HepG2 (cell line): ENCODE measurements at regions of chr9 and their contacts with region 1.

Region 1: DNA sequence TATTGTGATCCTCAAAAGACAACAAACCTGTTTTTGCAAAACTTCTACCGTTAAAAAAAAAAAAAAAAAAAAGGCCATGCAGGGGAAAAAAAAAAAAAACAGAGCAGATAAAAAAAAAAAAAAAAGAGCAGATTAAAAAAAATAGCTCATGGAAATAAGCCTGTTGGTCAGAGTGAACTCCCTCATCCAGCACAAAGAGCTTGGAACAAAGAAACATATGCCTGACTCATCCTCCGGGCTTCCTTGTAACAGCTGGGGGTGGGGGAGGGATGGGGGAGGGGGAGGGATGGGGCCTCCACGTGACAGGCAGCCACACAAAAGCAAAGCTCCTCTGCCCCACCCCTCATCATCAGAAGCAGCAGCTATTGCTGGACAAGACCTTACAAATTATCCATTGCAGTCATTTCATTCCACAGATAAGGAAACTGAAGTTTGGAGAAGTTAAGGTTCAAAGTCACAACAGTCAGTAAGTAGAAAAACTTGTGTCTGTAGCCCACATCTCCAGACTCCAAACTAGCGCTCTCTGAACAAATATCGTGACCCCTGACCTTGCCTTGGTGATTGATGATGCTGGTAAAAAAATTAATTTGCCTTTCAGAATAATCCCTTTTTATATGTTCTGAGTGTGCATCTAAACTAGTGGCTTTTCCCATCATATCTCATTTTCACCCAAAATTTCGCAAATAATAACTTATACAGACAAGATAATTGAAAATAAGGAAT is 38.9 kb downstream of the SLC35D2 start:
- DNase-seq: peak; percentile 84
- ATAC-seq: no peak; the same call in 1 of the 3 replicates
- H3K4me3 ChIP-seq: no peak overlapping the region
- H3K27ac ChIP-seq: peak overlapping the region; percentile 54
- H3K4me1 ChIP-seq: peaks cover 63% of the 10 kb centered on the region
- H3K27me3 ChIP-seq: no peaks in the 10 kb centered on the region
- CTCF ChIP-seq: no peak
- EP300 ChIP-seq: peak in 1 of 2 experiments; percentile 16; a peak in 1 of 4 replicates
- POLR2A ChIP-seq: no peak
- RAD21 ChIP-seq: no peak

Region 2: DNA sequence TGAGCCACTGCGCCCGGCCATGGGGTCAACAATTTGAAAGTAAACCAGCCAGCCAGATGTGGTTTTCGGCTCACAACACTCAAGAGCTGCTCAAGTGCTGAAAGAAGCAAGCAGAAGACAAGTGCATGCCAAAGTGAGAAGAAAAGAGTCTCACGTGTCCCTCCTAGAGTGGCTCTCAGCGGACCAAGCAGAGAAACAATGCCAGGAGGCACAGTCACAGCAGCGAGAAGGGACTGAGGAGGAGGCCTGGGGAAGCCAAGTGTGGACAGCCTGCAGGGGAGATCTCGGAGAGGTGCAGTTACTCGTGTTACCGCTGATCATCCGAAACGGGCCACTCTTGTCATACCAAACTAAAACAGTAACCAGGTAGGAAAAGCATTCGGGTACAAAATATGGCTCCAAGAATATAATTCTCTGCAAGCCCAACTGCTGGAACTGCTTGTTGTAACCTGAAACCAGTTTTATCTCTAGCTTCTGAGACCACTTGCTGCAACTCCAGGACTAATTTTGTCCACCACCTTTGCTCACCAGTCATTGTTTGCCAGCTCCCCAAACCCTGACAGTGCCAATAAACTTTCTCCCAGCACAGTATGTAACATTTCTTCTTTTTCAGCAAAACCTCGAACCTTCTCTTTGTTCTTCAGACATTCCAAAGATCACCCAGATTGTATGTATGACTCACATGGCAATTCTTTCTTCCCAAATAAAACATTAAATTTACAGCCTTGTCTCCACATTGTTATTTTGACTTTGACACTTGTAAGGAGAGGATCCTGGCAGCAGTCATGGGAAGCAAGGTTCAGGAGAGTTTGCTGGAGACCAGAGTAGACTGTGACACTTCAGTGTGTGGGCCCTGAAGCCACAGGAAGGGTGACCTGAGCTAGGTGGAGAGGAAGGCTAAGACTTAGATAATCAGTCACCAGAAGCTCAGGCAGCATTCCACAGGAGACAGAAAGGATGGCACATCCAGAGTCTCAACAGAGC is 32.6 kb after region 1 on chr9:
- CTCF ChIA-PET with region 1: no interaction called
- POLR2A ChIA-PET with region 1: interaction called, 12 read pairs
- in situ Hi-C with region 1: no loop called
- intact Hi-C with region 1: no loop called
- DNase-seq: peak; percentile 39
- ATAC-seq: peak; percentile 53
- H3K4me3 ChIP-seq: 0 out of 6 replicates have a peak overlapping the region, but pooled peaks of 1 of the 3 experiments have one; percentile 1
- H3K27ac ChIP-seq: peak overlapping the region; percentile 51
- H3K4me1 ChIP-seq: peaks cover 71% of the 10 kb centered on the region
- H3K27me3 ChIP-seq: no peaks in the 10 kb centered on the region
- CTCF ChIP-seq: no peak
- EP300 ChIP-seq: 0 out of 4 replicates have a peak, but pooled peaks of 1 of the 2 experiments have one; percentile 23
- POLR2A ChIP-seq: no peak
- RAD21 ChIP-seq: no peak

Region 3: GRCh38 chr9:96383165-96383942 is 38.7 kb after region 1 on chr9 and contains the start of gene SLC35D2:
- CTCF ChIA-PET with region 1: no interaction called
- POLR2A ChIA-PET with region 1: interaction called, 14 read pairs
- in situ Hi-C with region 1: no loop called
- intact Hi-C with region 1: loop called (anchors 2 kb)
- DNase-seq: peak; percentile 73
- ATAC-seq: peak; percentile 93
- H3K4me3 ChIP-seq: peak within 1 kb of the TSS; percentile 63 to 87 (median 72)
- H3K27ac ChIP-seq: peak within 1 kb of the TSS; percentile 95
- H3K4me1 ChIP-seq: peaks cover 85% of the 10 kb centered on the region
- H3K27me3 ChIP-seq: no peaks in the 10 kb centered on the region; a peak in 1 of 5 replicates
- CTCF ChIP-seq: no peak
- EP300 ChIP-seq: no peak
- POLR2A ChIP-seq: peak; percentile 41 to 76; a peak in 3 of 4 replicates
- RAD21 ChIP-seq: no peak
- total RNA-seq, gene SLC35D2: 59.6 and 96.2 TPM in 2 replicates

Region 4: DNA sequence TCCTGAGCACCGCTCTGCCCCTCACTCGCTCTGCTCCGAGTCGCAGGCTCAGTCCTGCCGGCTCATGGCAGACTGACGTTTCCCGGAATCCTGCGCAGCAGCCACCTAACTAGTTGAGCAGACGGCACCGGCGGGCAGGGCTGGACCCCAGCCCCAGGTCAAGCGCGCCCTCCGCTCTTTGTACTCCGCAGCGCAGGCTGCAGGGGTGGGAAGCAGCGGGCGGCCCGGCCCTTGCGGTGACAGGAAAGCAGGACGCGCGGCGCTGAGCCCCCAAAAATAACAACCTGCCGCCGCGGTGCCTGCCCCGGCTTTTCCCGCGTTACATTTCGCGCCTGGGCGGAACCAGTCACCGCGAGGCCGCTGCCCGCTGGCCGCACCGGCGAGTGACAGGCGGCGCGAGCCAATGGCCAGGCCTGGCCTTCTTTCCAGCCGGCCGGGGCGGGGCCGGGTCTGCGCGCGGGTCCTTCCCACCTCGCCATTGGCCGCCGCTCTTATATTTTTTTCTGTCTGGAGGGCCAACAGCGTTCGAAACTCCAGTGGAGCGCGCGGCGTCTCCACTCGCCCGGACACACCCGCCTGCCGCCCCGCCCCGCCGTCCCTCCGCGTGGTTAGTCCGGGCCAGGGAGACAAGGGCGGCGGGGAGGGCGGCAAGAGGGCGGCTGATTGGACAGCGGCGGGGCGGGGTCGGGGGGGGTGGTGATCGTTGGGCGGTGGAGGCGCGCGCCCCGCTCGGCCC is 73.6 kb after region 1 on chr9 and contains the start of gene ZNF367:
- CTCF ChIA-PET with region 1: no interaction called
- POLR2A ChIA-PET with region 1: interaction called, 3 read pairs
- in situ Hi-C with region 1: loop called (anchors 5 kb)
- intact Hi-C with region 1: loop called (anchors 5 kb)
- DNase-seq: peak; percentile 95
- ATAC-seq: peak; percentile 81
- H3K4me3 ChIP-seq: peak within 1 kb of the TSS; percentile 84 to 89 (median 88)
- H3K27ac ChIP-seq: peak within 1 kb of the TSS; percentile 99
- H3K4me1 ChIP-seq: peaks cover 58% of the 10 kb centered on the region
- H3K27me3 ChIP-seq: no peaks in the 10 kb centered on the region; a peak in 1 of 5 replicates
- CTCF ChIP-seq: no peak
- EP300 ChIP-seq: no peak; a peak in 1 of 4 replicates
- POLR2A ChIP-seq: peak; percentile 67
- RAD21 ChIP-seq: peak; percentile 20; the same call in 1 of the 2 replicates
- total RNA-seq, gene ZNF367: 7.7 and 8.1 TPM in 2 replicates